ENCODE measurements at regions of chr3 and their contacts with region 1.

Region 1: GRCh38 chr3:177777699-177778098 is 580.4 kb upstream of the TBL1XR1 start:
- DNase-seq: peak; percentile 72
- H3K4me3 Mint-ChIP-seq: no peak overlapping the region
- H3K27ac Mint-ChIP-seq: no peak overlapping the region
- H3K4me1 Mint-ChIP-seq: peaks cover 11% of the 10 kb centered on the region
- H3K27me3 Mint-ChIP-seq: no peaks in the 10 kb centered on the region

Region 2: GRCh38 chr3:177554895-177555759 is 222.6 kb before region 1 on chr3:
- CTCF ChIA-PET with region 1: no interaction called
- intact Hi-C with region 1: loop called (anchors 5 kb)
- DNase-seq: no peak
- H3K4me3 Mint-ChIP-seq: no peak overlapping the region
- H3K27ac Mint-ChIP-seq: no peak overlapping the region
- H3K4me1 Mint-ChIP-seq: peaks cover 29% of the 10 kb centered on the region
- H3K27me3 Mint-ChIP-seq: no peaks in the 10 kb centered on the region

Measured in activated naive CD4-positive, alpha-beta T cell treated with anti-CD3 and anti-CD28 coated beads for 36 hours (primary cell).